ENCODE measurements at regions of chr20 and their contacts with region 1.

Region 1: DNA sequence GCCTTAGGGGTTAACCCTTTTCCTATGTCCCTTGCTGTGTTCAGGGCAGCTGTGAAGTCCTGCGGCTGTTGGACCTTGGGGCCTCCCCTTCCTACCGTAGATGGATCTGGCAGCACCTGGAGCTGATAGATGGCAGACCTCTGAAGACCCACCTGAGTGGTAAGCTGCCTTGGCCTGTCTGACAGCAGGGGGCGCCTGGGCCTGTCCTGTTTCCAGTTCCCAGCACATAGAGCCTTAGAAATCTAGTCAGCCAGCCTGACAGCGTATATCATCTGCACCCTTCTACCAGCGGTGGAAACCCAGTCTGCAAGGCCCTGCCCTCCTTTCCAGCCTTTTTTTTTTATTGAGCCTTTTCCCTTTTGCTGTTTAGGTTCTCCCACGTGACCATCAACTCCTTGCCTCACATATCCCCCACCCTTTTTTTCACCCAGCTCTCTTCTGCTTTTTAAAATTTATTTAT is 26.6 kb downstream of the CNBD2 start:
- DNase-seq: peak; percentile 88
- H3K27ac ChIP-seq: no peak overlapping the region
- CTCF ChIP-seq: peak; percentile 98

Region 2: DNA sequence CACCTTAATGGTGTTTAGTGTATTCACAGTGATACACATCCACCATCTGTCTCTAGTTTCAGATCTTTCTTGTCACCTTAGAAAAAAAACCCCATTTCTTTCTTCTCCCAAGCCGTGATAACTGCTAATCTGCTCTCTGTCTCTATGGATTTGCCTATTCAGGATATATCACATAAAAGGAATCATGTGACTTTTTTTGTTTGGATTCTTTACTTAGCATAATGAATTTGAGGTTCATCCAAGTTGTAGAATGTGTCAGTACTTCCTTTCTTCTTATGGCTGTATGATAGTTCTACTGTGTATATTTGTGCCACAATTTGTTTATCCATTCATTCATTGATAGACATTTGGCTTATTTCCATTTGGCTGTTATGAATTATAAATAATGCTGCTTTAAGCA is 1574.9 kb before region 1 on chr20:
- CTCF ChIA-PET with region 1: no interaction called
- POLR2A ChIA-PET with region 1: no interaction called
- DNase-seq: no peak
- H3K27ac ChIP-seq: no peak overlapping the region
- CTCF ChIP-seq: no peak

Region 3: GRCh38 chr20:35673884-35674283 is 321.1 kb before region 1 on chr20:
- CTCF ChIA-PET with region 1: no interaction called
- POLR2A ChIA-PET with region 1: no interaction called
- DNase-seq: no peak
- H3K27ac ChIP-seq: no peak overlapping the region
- CTCF ChIP-seq: no peak

Region 4: DNA sequence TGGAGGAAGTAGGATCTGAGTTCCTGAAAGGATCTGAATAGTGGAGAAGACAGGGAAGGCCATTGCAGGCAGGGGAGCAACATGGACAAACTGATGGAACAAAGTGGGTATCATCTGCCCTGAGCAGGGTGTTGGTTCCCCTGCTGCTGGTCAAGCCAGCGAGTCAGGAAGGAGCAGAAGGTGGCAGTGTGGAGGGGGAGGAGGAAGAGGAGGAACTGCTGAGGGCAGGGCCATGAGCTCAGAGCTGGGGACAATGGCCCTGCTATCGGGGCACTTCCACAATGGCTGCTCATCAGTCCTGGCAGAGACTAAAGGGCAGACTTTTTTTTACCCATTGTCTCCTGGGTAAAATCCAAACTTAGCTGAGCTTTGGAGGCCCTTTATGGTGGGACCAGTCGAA is 13.1 kb before region 1 on chr20:
- CTCF ChIA-PET with region 1: interaction called, 16 read pairs
- POLR2A ChIA-PET with region 1: no interaction called
- DNase-seq: no peak
- H3K27ac ChIP-seq: no peak overlapping the region
- CTCF ChIP-seq: no peak

Region 5: DNA sequence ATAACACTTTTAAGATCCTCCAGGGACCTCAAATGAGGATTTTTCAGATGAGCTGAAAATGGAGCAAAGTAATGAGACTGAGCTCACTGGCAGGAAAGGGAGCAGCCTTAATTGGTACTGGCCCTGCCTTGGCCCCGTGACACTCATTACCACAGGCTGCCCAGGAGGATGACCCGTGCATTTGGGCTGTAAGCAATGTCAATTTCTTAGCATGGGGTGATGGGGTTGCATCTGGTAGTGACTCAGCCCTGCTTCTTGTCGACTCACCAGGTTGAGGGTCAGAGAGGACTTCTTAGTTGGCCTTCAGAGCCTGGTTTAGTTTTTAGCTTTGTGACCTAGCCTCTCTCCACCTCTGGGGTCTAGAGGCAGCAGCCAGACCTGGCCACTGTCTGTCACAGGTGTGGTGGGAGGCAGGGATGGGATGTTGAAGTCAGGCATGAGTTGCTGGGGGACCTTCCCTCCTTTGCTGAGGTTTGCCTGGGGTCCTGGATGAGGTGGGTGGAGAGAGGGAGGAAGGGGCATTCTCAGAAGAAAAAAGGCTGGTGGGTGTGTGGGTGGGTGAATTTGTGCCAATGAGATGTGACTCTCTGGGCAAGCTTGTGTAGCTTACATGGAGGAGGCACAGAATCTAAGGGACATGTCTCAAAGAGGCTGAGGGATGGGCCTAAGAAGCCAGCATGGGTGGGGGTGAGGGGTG is 133.6 kb after region 1 on chr20:
- CTCF ChIA-PET with region 1: interaction called, 16 read pairs
- POLR2A ChIA-PET with region 1: no interaction called
- DNase-seq: peak; percentile 57
- H3K27ac ChIP-seq: peak overlapping the region; percentile 22
- CTCF ChIP-seq: no peak

Region 6: GRCh38 chr20:36145877-36146707 is 151.1 kb after region 1 on chr20:
- CTCF ChIA-PET with region 1: interaction called, 115 read pairs
- POLR2A ChIA-PET with region 1: no interaction called
- DNase-seq: no peak
- H3K27ac ChIP-seq: no peak overlapping the region
- CTCF ChIP-seq: no peak